HepG2 (cell line): ENCODE measurements at regions of chr4 and their contacts with region 1.

Region 1: GRCh38 chr4:25180524-25181131 is 20.4 kb upstream of the SEPSECS start:
- DNase-seq: peak; percentile 56
- ATAC-seq: peak; percentile 59
- H3K4me3 ChIP-seq: no peak overlapping the region
- H3K27ac ChIP-seq: no peak overlapping the region
- H3K4me1 ChIP-seq: peaks cover 52% of the 10 kb centered on the region
- H3K27me3 ChIP-seq: no peaks in the 10 kb centered on the region
- CTCF ChIP-seq: peak; percentile 68
- EP300 ChIP-seq: no peak
- POLR2A ChIP-seq: no peak
- RAD21 ChIP-seq: no peak; the same call in 1 of the 2 replicates

Region 2: DNA sequence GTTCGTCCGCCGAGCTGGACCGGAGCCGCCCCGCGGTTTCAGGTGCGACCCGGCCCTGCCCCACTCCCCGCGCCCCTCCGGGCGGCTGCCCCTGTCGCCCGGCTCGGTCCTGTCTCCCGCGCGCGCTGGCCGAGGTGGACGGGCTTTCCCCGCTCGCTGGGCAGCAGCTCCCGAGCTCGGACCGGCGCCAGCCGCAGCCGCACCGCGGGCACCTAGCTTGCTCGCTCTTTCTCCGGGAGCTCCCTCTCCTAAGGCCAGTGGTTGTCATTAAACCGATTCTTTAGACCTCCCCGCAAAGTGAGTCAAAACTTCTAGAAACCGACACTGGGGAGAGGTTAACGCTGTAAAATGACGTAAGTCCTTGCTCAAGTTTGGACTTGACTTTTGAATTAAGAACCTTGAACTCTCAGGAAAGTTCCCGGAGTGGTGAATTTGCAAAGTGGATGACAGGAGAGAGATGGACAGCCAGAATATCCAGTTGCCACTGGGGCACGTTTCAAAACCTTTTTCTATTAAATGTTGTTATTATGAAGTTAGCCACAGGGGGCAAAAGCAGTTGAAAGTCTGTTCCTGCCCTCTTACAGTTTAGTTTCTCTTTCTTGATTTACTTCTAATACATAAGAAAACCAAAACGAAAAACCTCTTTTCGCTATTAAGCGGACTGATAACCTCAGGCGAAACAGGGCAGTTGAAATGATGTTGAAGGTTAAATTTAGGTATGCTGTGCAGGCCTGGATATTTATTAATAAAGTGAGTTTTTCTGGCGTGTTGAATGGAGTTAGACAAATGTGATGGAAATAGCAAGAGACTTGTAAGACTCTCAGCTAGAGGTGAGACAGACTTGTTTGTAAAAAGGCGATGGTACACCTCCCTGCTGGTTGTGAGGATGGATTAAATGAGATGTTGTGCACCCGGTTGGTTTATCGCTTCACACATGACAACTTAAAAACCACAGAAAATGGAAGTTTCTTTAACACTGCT is 54.1 kb after region 1 on chr4:
- CTCF ChIA-PET with region 1: no interaction called
- POLR2A ChIA-PET with region 1: interaction called, 4 read pairs
- in situ Hi-C with region 1: no loop called
- intact Hi-C with region 1: loop called (anchors 2 kb)
- DNase-seq: peak; percentile 89
- ATAC-seq: peak; percentile 79
- H3K4me3 ChIP-seq: peak overlapping the region; percentile 84 to 98 (median 91)
- H3K27ac ChIP-seq: peak overlapping the region; percentile 79
- H3K4me1 ChIP-seq: peaks cover 35% of the 10 kb centered on the region
- H3K27me3 ChIP-seq: no peaks in the 10 kb centered on the region; a peak in 1 of 5 replicates
- CTCF ChIP-seq: peak; percentile 33
- EP300 ChIP-seq: no peak
- POLR2A ChIP-seq: peak in 1 of 2 experiments; percentile 42; a peak in 1 of 4 replicates
- RAD21 ChIP-seq: no peak

Region 3: DNA sequence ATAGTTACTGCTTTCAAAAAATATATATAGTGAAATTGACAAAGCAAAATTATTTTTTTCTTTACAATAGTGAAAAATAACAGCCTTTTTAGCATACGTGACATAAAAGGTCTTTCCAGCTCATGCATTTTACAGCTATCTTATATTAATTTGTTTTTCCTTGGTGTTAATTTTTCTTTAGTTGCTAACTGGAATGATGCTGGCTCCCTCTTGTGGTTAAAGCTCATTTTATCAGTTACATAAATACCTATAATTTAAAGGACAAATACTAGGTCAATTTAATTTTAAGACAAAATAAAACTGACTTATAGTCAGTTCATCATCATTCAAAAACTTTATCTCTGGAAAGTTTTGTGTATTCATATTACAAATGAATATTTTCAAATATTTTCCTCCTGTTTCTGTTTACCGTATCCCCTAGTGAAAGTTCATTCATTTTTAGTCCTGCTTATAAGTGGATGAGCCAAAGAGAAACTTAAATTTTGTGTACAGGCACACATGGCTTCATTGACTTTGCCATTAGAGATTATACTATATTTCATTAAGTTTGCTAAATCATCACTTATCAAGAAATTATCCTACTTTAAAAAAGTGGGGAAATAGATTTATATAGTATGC is 186.5 kb after region 1 on chr4:
- CTCF ChIA-PET with region 1: interaction called, 6 read pairs
- POLR2A ChIA-PET with region 1: no interaction called
- in situ Hi-C with region 1: loop called (anchors 10 kb)
- intact Hi-C with region 1: loop called (anchors 2 kb)
- DNase-seq: no peak
- ATAC-seq: no peak
- H3K4me3 ChIP-seq: no peak overlapping the region
- H3K27ac ChIP-seq: no peak overlapping the region
- H3K4me1 ChIP-seq: peaks cover 24% of the 10 kb centered on the region
- H3K27me3 ChIP-seq: no peaks in the 10 kb centered on the region
- CTCF ChIP-seq: peak; percentile 42
- EP300 ChIP-seq: no peak
- POLR2A ChIP-seq: no peak
- RAD21 ChIP-seq: no peak